Activated CD8-positive, alpha-beta memory T cell treated with anti-CD3 and anti-CD28 coated beads, Interleukin-2, amount 10 ng/mL, durations not matched to agents 7 days and 5 days (primary cell): ENCODE measurements at regions of chr4 and their contacts with region 1.

Region 1: GRCh38 chr4:2761035-2761923 is 5.1 kb upstream of the TNIP2 start:
- DNase-seq: peak; percentile 75
- ATAC-seq: peak; percentile 11
- H3K4me3 Mint-ChIP-seq: no peak overlapping the region
- H3K27ac Mint-ChIP-seq: no peak overlapping the region
- H3K4me1 Mint-ChIP-seq: peaks cover 22% of the 10 kb centered on the region
- H3K27me3 Mint-ChIP-seq: no peaks in the 10 kb centered on the region

Region 2: GRCh38 chr4:2781921-2782320 is 20.6 kb after region 1 on chr4:
- CTCF ChIA-PET with region 1: interaction called, 16 read pairs
- DNase-seq: no peak
- ATAC-seq: no peak
- H3K4me3 Mint-ChIP-seq: no peak overlapping the region
- H3K27ac Mint-ChIP-seq: no peak overlapping the region
- H3K4me1 Mint-ChIP-seq: peaks cover 4% of the 10 kb centered on the region
- H3K27me3 Mint-ChIP-seq: peaks cover 4% of the 10 kb centered on the region

Region 3: GRCh38 chr4:2811830-2812611 is 50.7 kb after region 1 on chr4:
- CTCF ChIA-PET with region 1: interaction called, 41 read pairs
- DNase-seq: peak; percentile 88
- ATAC-seq: peak; percentile 72
- H3K4me3 Mint-ChIP-seq: peak overlapping the region; percentile 84
- H3K27ac Mint-ChIP-seq: peak overlapping the region; percentile 82
- H3K4me1 Mint-ChIP-seq: peaks cover 48% of the 10 kb centered on the region
- H3K27me3 Mint-ChIP-seq: no peaks in the 10 kb centered on the region

Region 4: DNA sequence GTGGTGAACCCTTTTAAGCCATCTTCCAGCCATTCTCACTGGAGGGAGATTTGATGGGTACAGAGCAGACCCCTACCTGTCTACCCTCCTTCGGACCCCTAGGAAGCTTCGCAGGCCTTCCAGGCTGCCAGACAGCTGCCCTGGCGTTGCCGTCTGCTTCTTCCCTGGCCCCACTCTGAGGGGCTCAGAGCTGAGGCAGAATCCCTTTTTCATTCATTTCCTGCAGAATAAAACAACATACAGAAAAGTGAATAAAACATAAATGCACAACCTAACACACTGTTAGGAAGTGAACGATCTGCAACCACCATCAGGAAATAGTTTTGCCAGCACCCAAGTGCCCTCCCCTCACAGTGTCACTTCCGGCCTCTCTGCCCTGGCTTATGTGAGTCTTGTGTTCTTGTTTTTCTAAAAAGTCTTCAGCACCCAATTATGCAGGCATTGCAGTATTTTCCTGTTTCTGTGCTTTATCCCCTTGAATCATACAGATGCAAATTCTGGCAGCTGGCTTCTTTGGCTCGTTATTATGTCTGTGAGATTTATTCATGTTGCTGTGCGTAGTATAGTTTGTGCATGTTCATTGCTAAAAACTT is 76.7 kb after region 1 on chr4:
- CTCF ChIA-PET with region 1: interaction called, 11 read pairs
- DNase-seq: peak; percentile 88
- ATAC-seq: peak; percentile 84
- H3K4me3 Mint-ChIP-seq: peak overlapping the region; percentile 71
- H3K27ac Mint-ChIP-seq: peak overlapping the region; percentile 95
- H3K4me1 Mint-ChIP-seq: peaks cover 70% of the 10 kb centered on the region
- H3K27me3 Mint-ChIP-seq: no peaks in the 10 kb centered on the region

Region 5: GRCh38 chr4:2891294-2891693 is 130.0 kb after region 1 on chr4:
- CTCF ChIA-PET with region 1: no interaction called
- DNase-seq: no peak
- ATAC-seq: no peak
- H3K4me3 Mint-ChIP-seq: no peak overlapping the region
- H3K27ac Mint-ChIP-seq: peak overlapping the region; percentile 38
- H3K4me1 Mint-ChIP-seq: peaks cover 5% of the 10 kb centered on the region
- H3K27me3 Mint-ChIP-seq: no peaks in the 10 kb centered on the region

Region 6: GRCh38 chr4:2934813-2935761 is 173.8 kb after region 1 on chr4:
- CTCF ChIA-PET with region 1: interaction called, 18 read pairs
- DNase-seq: peak; percentile 96
- ATAC-seq: peak; percentile 58
- H3K4me3 Mint-ChIP-seq: peak overlapping the region; percentile 85
- H3K27ac Mint-ChIP-seq: peak overlapping the region; percentile 90
- H3K4me1 Mint-ChIP-seq: peaks cover 68% of the 10 kb centered on the region
- H3K27me3 Mint-ChIP-seq: no peaks in the 10 kb centered on the region

Region 7: GRCh38 chr4:2954358-2955185 is 193.3 kb after region 1 on chr4:
- CTCF ChIA-PET with region 1: interaction called, 19 read pairs
- DNase-seq: peak; percentile 86
- ATAC-seq: peak; percentile 77
- H3K4me3 Mint-ChIP-seq: peak overlapping the region; percentile 40
- H3K27ac Mint-ChIP-seq: peak overlapping the region; percentile 90
- H3K4me1 Mint-ChIP-seq: peaks cover 73% of the 10 kb centered on the region
- H3K27me3 Mint-ChIP-seq: no peaks in the 10 kb centered on the region